ENCODE measurements at regions of chr5 and their contacts with region 1.

Region 1: GRCh38 chr5:181260387-181261319 is at the start of gene TRIM52:
- DNase-seq: peak; percentile 92 to 94 (median 93)
- H3K4me3 ChIP-seq: peak within 1 kb of the TSS; percentile 81 to 94
- H3K4me3 Mint-ChIP-seq: peak within 1 kb of the TSS; percentile 96 to 100 (median 99)
- H3K27ac ChIP-seq: peak within 1 kb of the TSS; percentile 99
- H3K27ac Mint-ChIP-seq: peak within 1 kb of the TSS; percentile 97 to 99 (median 99)
- H3K4me1 ChIP-seq: peaks cover 54% of the 10 kb centered on the region
- H3K4me1 Mint-ChIP-seq: peaks cover 40 to 60% (median 50%) of the 10 kb centered on the region in 4 donors
- H3K27me3 ChIP-seq: no peaks in the 10 kb centered on the region
- H3K27me3 Mint-ChIP-seq: no peaks in the 10 kb centered on the region
- total RNA-seq, gene TRIM52: 73.0 to 76.8 TPM

Region 2: DNA sequence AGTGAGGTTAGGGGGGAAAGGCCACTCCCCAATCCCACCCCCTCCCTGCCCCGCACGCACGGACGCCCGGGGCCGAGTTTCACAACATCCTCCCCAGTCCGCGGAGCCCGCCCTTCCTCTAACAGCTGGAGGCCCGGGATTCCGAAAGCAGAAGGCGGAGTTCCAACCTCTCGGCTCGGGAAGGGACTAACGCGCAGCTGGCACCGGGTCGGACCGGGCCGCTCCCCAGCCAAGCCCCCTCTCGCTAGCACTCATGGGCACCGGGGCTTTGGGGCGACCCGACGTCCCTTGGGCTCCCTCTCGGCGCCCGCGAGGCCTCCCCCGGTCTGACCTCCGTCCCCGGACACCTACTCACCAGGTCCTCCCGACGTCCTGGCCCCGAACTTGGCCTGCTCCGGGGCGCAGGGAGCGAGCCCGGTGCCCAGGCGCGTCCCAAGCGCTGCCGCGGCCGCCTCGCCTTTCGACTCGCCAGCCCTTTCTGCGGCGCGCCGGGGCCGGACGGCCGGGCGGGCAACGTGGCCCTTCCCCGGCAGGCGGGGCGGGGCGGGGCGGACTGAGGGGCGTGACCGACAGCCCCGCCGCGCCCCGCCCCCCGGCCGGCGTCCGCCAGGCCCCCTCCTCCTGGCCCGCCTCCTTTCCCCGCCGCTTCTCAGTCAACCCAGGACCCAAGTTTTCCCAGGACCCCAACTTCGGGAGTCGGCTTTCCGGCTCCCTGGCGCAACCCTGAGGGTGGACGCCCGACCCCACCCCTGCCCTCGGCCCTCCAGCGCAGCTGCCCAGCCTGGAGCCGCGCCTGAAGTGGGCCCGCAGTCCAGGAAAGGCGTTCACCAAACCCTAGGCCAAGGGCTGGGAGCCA is 458.1 kb before region 1 on chr5 and contains the start of gene MGAT1:
- CTCF ChIA-PET with region 1: no interaction called
- POLR2A ChIA-PET with region 1: interaction called, 15 read pairs
- intact Hi-C with region 1: no loop called
- DNase-seq: peak; percentile 60 to 77 (median 66)
- H3K4me3 ChIP-seq: peak within 1 kb of the TSS; percentile 38 to 84
- H3K4me3 Mint-ChIP-seq: peak within 1 kb of the TSS; percentile 87 to 99 (median 96)
- H3K27ac ChIP-seq: peak within 1 kb of the TSS; percentile 87
- H3K27ac Mint-ChIP-seq: peak within 1 kb of the TSS; percentile 92 to 98 (median 95)
- H3K4me1 ChIP-seq: peaks cover 82% of the 10 kb centered on the region
- H3K4me1 Mint-ChIP-seq: peaks cover 66 to 93% (median 77%) of the 10 kb centered on the region in 4 donors
- H3K27me3 ChIP-seq: no peaks in the 10 kb centered on the region
- H3K27me3 Mint-ChIP-seq: no peaks in the 10 kb centered on the region
- total RNA-seq, gene MGAT1: 187 TPM

Region 3: DNA sequence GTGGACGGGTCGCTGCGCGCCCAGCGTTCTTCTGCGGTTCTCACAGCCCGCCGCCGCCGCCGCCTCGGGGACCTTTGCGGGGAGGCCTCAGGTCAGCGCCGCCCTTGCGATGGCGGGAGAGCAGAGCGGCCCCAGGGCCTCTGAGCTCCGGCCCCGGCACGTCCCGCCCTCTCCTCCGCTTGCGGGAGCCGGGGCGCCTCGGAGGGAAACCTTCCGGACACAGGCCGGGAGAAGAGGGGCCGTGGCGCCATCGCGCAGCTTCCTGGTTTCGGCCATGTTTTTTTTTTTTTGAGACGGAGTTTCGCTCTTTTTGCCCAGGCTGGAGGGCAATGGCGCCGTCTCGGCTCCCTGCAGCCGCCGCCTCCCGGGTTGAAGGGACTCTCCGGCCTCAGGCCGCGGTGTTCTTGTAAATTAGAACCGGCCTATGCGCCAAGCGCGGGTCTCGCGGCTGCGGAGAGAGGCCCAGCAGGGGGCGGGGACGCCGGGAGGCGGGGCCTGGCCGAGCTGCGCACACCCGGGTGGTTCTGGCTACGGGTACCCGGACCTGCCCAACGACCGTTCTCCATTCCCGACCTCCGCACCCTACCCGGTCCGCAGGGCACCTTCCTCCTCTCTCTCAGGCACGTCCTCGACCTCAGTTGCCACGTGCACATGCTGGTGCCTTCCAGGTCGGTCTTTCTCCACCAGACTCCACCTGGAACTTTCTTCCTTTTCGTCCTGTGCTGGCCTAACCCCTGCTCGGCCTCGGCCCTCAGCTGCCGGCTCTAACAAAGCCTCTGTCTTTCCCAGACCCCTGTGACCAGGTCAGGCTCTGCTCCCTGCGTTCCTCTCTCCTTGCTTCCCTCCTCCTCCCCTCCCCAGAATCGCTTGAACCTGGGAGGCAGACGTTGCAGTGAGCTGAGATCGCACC is 429.3 kb before region 1 on chr5:
- CTCF ChIA-PET with region 1: no interaction called
- POLR2A ChIA-PET with region 1: interaction called, 10 read pairs
- intact Hi-C with region 1: no loop called
- DNase-seq: peak; percentile 67 to 81 (median 72)
- H3K4me3 ChIP-seq: peak overlapping the region; percentile 59 to 83
- H3K4me3 Mint-ChIP-seq: peak overlapping the region; percentile 94 to 99 (median 98)
- H3K27ac ChIP-seq: peak overlapping the region; percentile 94
- H3K27ac Mint-ChIP-seq: peak overlapping the region; percentile 97 to 99 (median 98)
- H3K4me1 ChIP-seq: peaks cover 51% of the 10 kb centered on the region
- H3K4me1 Mint-ChIP-seq: peaks cover 33 to 66% (median 50%) of the 10 kb centered on the region in 4 donors
- H3K27me3 ChIP-seq: no peaks in the 10 kb centered on the region
- H3K27me3 Mint-ChIP-seq: no peaks in the 10 kb centered on the region

Region 4: DNA sequence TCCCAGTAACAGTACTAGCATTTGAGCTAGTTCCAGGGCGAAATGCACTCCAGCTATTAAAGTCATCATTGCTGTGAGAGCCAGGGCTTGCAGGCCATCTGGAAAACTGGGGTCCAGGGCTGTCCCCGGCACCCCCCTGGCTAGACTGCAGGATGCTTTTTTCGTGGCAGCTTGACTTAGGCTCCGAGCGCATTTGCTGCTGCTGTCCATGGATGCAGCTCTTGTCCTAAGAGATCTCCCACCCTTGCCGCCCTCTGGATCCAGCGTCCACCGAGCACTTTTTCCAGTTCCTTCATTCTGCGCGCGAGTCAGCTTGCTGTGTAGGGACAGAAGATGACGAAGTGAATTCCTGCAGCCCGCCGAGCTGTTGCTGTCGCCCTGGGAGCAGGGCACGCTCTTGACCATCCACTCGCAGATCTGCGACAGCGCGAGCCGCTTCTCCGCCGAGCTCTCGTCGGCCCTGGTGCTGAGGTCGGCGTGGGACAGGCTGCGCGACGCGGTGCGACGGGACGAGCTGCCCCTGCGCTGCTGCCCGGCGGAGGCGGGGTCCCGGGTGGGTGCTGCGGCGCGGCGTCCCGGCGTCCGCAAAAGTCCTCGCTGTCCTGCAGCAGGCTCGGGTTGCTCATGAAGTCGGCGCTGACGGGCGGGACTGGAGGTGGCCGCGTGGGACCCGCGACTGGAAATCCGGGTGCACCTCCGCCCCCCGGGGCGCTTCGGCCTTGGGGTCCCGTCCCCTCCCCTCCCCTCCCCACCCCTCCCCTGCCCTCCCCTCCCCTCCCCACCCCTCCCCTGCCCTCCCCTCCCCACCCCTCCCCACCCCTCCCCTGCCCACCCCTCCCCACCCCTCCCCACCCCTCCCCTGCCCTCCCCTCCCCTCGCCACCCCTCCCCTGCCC is 160.3 kb before region 1 on chr5:
- CTCF ChIA-PET with region 1: no interaction called
- POLR2A ChIA-PET with region 1: no interaction called
- intact Hi-C with region 1: no loop called
- DNase-seq: no peak
- H3K4me3 ChIP-seq: no peak overlapping the region
- H3K4me3 Mint-ChIP-seq: peak overlapping the region in 7 of 8 donors; percentile 24 to 67 (median 41)
- H3K27ac ChIP-seq: no peak overlapping the region
- H3K27ac Mint-ChIP-seq: peak overlapping the region in 3 of 7 donors; percentile 32 to 71 (median 65)
- H3K4me1 ChIP-seq: peaks cover 4% of the 10 kb centered on the region
- H3K4me1 Mint-ChIP-seq: peaks cover 7 to 25% (median 16%) of the 10 kb centered on the region in 4 donors
- H3K27me3 ChIP-seq: peaks cover 14% of the 10 kb centered on the region
- H3K27me3 Mint-ChIP-seq: peaks cover 29 to 30% of the 10 kb centered on the region in 2 donors

Region 5: DNA sequence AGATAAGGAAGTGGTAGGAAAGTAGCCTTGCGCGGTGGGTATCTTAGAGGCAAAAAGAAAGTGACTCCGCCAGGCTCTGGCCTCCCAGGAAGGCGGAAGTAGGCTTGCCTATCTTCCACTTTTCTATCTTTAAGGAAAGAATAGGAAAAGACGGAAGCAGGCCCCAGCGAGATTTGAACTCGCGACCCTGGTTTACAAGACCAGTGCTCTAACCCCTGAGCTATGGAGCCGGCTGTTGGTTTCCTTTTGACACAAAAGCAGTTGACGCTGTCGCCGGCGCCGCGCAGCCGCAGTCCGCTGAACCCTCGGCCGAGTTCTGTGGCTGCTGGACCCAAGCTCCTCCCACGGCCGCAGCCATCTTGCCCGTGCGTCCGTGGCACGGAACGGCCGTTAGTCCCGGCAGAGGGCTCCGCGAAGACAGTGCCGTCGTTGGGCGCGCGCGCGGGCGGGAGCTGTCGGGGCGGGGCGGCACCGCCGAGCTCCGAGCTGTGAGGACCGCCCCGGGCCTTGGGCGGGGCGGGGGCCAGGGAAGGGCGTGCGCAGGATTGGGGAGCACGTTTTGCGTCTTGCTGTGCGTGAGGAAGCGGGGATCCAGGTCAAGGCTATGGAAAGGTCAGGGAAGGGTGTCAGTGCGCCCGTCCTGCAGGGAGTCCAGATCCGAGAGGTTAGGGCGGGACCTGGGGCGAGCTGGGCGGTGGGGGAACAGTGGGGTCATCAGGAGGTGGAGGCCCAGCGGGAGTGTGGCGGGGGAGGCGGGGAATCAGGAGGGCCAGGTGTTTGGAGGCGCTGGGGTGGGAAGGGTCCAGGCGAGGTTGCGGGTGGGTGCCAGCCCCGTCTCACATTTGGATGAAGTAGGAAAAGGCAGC is 68.9 kb before region 1 on chr5:
- CTCF ChIA-PET with region 1: interaction called, 21 read pairs
- POLR2A ChIA-PET with region 1: interaction called, 144 read pairs
- intact Hi-C with region 1: loop called (anchors 1 kb)
- DNase-seq: peak; percentile 94 to 98 (median 96)
- H3K4me3 ChIP-seq: peak overlapping the region; percentile 87 to 97
- H3K4me3 Mint-ChIP-seq: peak overlapping the region; percentile 96 to 99 (median 98)
- H3K27ac ChIP-seq: peak overlapping the region; percentile 79
- H3K27ac Mint-ChIP-seq: peak overlapping the region; percentile 95 to 100 (median 97)
- H3K4me1 ChIP-seq: peaks cover 16% of the 10 kb centered on the region
- H3K4me1 Mint-ChIP-seq: peaks cover 16 to 64% (median 32%) of the 10 kb centered on the region in 4 donors
- H3K27me3 ChIP-seq: no peaks in the 10 kb centered on the region
- H3K27me3 Mint-ChIP-seq: peaks cover 5 to 19% of the 10 kb centered on the region in 2 donors

Region 6: GRCh38 chr5:181217111-181217802 is 43.4 kb before region 1 on chr5:
- CTCF ChIA-PET with region 1: interaction called, 13 read pairs
- POLR2A ChIA-PET with region 1: interaction called, 215 read pairs
- intact Hi-C with region 1: no loop called
- DNase-seq: peak; percentile 66 to 84 (median 71)
- H3K4me3 ChIP-seq: peak overlapping the region; percentile 32 to 61
- H3K4me3 Mint-ChIP-seq: peak overlapping the region; percentile 95 to 100 (median 99)
- H3K27ac ChIP-seq: peak overlapping the region; percentile 54
- H3K27ac Mint-ChIP-seq: peak overlapping the region; percentile 96 to 100 (median 98)
- H3K4me1 ChIP-seq: peaks cover 36% of the 10 kb centered on the region
- H3K4me1 Mint-ChIP-seq: peaks cover 27 to 60% (median 44%) of the 10 kb centered on the region in 4 donors
- H3K27me3 ChIP-seq: no peaks in the 10 kb centered on the region
- H3K27me3 Mint-ChIP-seq: peaks cover 2 to 20% of the 10 kb centered on the region in 2 donors

Region 7: GRCh38 chr5:181234455-181235306 is 26.0 kb before region 1 on chr5:
- CTCF ChIA-PET with region 1: no interaction called
- POLR2A ChIA-PET with region 1: interaction called, 397 read pairs
- intact Hi-C with region 1: no loop called
- DNase-seq: no peak
- H3K4me3 ChIP-seq: no peak overlapping the region
- H3K4me3 Mint-ChIP-seq: no peak overlapping the region
- H3K27ac ChIP-seq: no peak overlapping the region
- H3K27ac Mint-ChIP-seq: peak overlapping the region in 5 of 7 donors; percentile 32 to 77 (median 49)
- H3K4me1 ChIP-seq: no peaks in the 10 kb centered on the region
- H3K4me1 Mint-ChIP-seq: peaks cover 9 to 36% (median 19%) of the 10 kb centered on the region in 4 donors
- H3K27me3 ChIP-seq: no peaks in the 10 kb centered on the region
- H3K27me3 Mint-ChIP-seq: no peaks in the 10 kb centered on the region

Measured in CD4-positive, alpha-beta memory T cell (primary cell).